AG04449 (cell line): ENCODE measurements at regions of chr11 and their contacts with region 1.

Region 1: DNA sequence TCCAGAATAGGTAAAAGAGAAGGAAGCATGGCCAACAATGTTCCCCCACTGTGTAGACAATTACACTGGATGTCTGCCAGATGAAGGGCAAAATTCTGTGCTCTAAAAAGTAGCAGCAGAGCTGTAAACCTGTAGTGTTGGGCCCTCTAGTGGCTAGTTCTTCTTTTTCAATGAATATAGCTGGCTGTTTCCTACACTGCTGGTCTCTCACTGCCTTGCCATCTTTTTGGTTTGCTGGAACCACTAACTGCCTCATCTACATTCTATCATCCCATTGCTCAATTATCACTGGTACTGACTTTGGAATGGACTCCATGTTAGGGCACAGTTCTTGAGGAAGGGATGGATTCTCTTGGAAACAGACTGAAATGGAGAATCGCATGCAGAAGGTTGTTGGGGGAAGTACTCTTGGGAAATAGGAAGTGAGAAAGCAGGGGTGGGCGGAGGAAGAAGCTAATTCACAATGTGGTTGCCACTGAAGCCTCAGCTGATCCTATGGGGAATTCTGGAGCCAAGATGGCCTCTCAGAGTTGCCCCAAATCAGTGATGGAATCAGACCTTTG is 17.9 kb downstream of the KCNE3 start:
- DNase-seq: peak; percentile 23
- H3K4me3 ChIP-seq: no peak overlapping the region
- CTCF ChIP-seq: peak; percentile 68

Region 2: GRCh38 chr11:74269161-74269811 is 180.2 kb before region 1 on chr11:
- CTCF ChIA-PET with region 1: interaction called, 674 read pairs
- POLR2A ChIA-PET with region 1: no interaction called
- DNase-seq: no peak
- H3K4me3 ChIP-seq: no peak overlapping the region
- CTCF ChIP-seq: no peak

Region 3: DNA sequence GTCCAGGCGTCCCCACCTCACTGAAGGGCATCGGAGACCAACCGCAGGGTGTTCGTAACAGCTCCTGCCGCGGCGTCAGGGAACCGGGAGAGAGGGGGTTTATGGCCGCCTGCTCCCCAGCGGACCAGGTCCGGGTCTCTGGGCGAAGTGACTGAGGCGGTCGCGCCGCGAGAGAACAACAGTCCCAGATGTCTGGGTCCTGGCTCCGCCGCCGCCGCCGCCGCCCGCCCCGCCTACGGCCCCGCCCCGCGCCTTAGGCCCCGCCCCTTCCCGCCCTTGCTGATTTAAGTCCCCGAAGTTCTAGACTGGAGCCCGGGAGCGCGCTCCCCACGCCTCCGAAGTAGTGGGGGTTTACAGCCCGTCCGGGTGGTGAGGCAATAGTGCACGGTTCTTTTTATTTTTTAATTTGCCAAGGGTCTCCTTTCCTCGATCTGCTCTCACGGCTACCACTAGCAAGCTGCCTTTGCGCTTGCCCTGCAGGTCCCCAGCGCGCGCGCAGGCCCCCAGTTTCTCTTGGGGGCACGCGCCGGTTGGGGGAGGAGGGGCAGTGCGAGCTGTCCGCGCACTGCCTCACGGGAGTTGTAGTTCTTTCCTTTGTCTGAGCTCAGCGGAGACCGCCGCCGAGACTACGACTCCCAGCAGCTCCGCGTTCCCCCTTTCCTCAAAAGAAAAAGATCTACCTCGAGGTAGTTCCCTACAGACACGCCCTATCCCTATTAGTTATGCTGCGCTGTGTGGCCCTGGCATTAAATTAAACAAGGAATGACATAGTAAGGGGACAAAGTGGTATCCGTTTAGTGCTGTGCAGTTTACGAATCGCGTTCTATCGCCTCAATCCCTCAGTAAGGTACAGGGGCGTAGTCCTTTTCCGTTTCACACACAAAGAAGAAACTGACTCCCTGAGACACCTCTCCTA is 50.9 kb before region 1 on chr11 and contains the start of gene PGM2L1:
- CTCF ChIA-PET with region 1: interaction called, 128 read pairs
- POLR2A ChIA-PET with region 1: no interaction called
- DNase-seq: peak; percentile 47
- H3K4me3 ChIP-seq: peak within 1 kb of the TSS; percentile 93
- CTCF ChIP-seq: no peak

Region 4: DNA sequence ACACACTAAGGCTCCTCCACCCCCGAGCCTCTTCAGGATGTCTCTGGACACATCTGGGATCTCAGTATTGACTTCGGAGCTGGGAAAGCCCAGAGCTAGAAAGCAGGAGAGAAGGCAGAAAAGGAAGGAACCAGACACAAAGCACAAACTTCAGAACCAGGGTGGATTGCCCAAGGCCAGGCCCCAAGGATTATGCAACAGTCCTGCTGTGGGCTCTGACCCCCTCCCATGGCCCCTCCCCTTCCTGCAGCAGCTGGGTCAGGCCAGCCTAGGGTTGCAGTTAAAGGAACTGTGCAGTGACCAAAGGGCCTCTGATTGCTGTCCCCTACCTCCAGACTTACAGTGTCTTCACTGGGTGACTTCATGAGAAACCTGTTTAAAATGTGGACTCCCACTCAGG is 12.6 kb after region 1 on chr11:
- CTCF ChIA-PET with region 1: interaction called, 92 read pairs
- POLR2A ChIA-PET with region 1: no interaction called
- DNase-seq: no peak
- H3K4me3 ChIP-seq: no peak overlapping the region
- CTCF ChIP-seq: no peak

Region 5: GRCh38 chr11:74577624-74578396 is 128.4 kb after region 1 on chr11:
- CTCF ChIA-PET with region 1: interaction called, 276 read pairs
- POLR2A ChIA-PET with region 1: no interaction called
- DNase-seq: no peak
- H3K4me3 ChIP-seq: no peak overlapping the region
- CTCF ChIP-seq: no peak